Activated naive CD4-positive, alpha-beta T cell treated with anti-CD3 and anti-CD28 coated beads for 36 hours (primary cell): ENCODE measurements at regions of chr9 and their contacts with region 1.

Region 1: GRCh38 chr9:2837915-2838314 is 6.0 kb downstream of the PUM3 start:
- DNase-seq: no peak
- H3K4me3 Mint-ChIP-seq: no peak overlapping the region
- H3K27ac Mint-ChIP-seq: no peak overlapping the region
- H3K4me1 Mint-ChIP-seq: peaks cover 12% of the 10 kb centered on the region
- H3K27me3 Mint-ChIP-seq: no peaks in the 10 kb centered on the region

Region 2: GRCh38 chr9:2125906-2126305 is 712.0 kb before region 1 on chr9:
- CTCF ChIA-PET with region 1: no interaction called
- intact Hi-C with region 1: loop called (anchors 5 kb)
- DNase-seq: no peak
- H3K4me3 Mint-ChIP-seq: peak overlapping the region; percentile 46
- H3K27ac Mint-ChIP-seq: peak overlapping the region; percentile 85
- H3K4me1 Mint-ChIP-seq: peaks cover 31% of the 10 kb centered on the region
- H3K27me3 Mint-ChIP-seq: no peaks in the 10 kb centered on the region

Region 3: DNA sequence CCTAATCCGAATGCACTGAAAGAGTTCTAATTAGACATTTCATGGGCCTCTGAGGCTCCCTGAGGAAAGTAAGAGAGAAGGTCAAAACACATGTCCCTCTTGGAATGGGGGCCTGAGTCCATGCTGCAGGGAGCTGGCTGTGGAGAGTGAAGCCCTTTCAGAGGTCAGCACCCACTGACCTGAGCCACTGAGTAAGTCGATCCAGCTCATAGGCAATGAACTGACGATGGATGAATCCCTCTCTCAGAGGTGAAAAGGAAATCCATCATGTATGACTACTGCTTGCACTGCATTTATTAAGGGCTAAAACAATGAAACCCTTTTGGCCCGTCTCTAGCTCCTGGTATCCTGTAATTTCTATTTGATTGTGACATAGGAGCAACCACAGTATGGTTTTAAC is 505.3 kb before region 1 on chr9:
- CTCF ChIA-PET with region 1: no interaction called
- intact Hi-C with region 1: no loop called
- DNase-seq: no peak
- H3K4me3 Mint-ChIP-seq: no peak overlapping the region
- H3K27ac Mint-ChIP-seq: no peak overlapping the region
- H3K4me1 Mint-ChIP-seq: no peaks in the 10 kb centered on the region
- H3K27me3 Mint-ChIP-seq: peaks cover 5% of the 10 kb centered on the region